OCI-LY7 (cell line): ENCODE measurements at regions of chr5 and their contacts with region 1.

Region 1: GRCh38 chr5:156715287-156715686 is 134.8 kb upstream of the PPP1R2B start:
- DNase-seq: no peak
- H3K4me3 ChIP-seq: no peak overlapping the region
- H3K27ac ChIP-seq: no peak overlapping the region
- H3K4me1 ChIP-seq: peaks cover 16% of the 10 kb centered on the region
- CTCF ChIP-seq: no peak

Region 2: GRCh38 chr5:156815988-156816599 is 100.8 kb after region 1 on chr5:
- CTCF ChIA-PET with region 1: no interaction called
- POLR2A ChIA-PET with region 1: no interaction called
- intact Hi-C with region 1: loop called (anchors 5 kb)
- DNase-seq: peak; percentile 61
- H3K4me3 ChIP-seq: no peak overlapping the region
- H3K27ac ChIP-seq: no peak overlapping the region
- H3K4me1 ChIP-seq: peaks cover 36% of the 10 kb centered on the region
- CTCF ChIP-seq: peak; percentile 88